Activated CD4-positive, alpha-beta T cell treated with anti-CD3 and anti-CD28 coated beads, Interleukin-2, amount 10 ng/mL, durations not matched to agents 24 days and 14 days (primary cell): ENCODE measurements at regions of chr12 and their contacts with region 1.

Region 1: DNA sequence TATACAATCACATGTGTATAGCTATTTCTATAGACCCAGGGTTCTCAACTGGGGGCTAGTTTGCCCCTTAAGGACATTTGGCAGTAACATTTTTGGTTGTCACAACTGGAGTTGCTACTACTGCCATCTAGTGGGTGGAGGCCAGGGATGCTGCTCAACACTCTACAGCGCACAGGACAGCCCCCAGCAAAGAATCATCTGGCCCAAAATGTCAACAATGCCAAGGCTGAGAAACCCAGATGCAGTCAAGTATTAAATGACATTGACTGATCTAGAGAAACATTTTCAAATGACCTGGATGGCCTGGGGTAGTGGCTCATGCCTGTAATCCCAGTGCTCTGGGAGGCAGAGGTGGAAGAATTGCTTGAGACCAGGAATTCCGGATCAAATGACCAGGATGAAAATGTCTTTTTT is 5.8 kb downstream of the WSB2 start:
- DNase-seq: peak; percentile 91
- H3K4me3 Mint-ChIP-seq: no peak overlapping the region
- H3K27ac Mint-ChIP-seq: peak overlapping the region; percentile 79
- H3K4me1 Mint-ChIP-seq: peaks cover 48% of the 10 kb centered on the region
- H3K27me3 Mint-ChIP-seq: no peaks in the 10 kb centered on the region

Region 2: DNA sequence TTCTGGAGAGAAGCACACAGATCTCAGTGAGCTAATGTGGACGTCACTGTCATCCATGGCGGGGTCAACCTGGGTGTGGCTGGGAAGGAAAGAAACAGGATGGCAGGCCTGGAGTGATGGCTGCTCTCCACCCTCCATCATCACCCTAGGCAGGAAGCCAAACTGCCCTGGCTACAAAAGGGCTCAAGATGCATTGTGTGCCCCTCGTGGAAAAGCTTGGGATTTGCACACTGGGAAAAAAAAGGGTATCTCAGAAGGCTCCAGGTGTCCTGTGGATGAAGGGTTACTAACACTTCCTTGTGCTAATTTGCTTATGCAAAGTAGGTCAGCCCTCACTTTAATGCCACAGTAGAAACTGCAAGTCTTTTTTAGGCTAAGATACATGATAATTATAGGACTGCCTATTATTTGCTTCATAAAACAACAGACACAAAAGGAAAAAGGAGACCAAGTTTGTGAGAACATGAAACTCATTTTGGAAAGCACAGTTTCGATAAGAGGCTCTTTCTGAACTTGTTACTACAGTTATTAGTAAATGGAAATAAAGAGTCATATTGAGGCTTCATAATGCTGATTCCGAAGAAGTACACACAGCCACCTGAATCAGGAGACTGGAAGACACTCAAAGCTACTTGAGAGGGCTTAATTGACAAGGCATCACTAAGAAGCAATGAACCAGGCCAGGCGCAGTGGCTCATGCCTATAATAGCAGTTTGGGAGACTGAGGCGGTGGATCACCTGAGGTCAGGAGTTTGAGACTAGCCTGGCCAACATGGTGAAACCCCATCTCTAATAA is 19.7 kb before region 1 on chr12:
- intact Hi-C with region 1: loop called (anchors 1 kb)
- DNase-seq: no peak
- H3K4me3 Mint-ChIP-seq: peak overlapping the region; percentile 57
- H3K27ac Mint-ChIP-seq: peak overlapping the region; percentile 99
- H3K4me1 Mint-ChIP-seq: peaks cover 46% of the 10 kb centered on the region
- H3K27me3 Mint-ChIP-seq: peaks cover 2% of the 10 kb centered on the region

Region 3: DNA sequence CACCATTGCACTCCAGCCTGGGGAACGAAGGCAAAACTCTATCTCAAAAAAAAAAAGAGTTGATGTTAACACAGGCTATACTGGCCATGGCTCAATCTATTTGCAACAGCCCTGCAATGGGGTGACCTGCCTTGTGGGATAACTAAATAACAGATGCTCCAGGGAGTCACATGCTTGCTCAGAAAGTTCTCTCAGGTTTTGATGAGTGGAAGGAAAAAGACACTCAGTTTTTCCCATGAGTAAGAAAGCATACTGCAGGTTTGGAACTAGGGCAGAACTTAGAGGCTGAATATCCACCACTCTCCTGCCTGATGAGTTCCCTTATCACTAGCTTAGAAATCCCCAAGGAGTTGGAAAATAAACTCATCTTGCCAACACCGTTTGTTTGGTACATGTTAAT is 11.1 kb before region 1 on chr12:
- intact Hi-C with region 1: loop called (anchors 1 kb)
- DNase-seq: no peak
- H3K4me3 Mint-ChIP-seq: peak overlapping the region; percentile 66
- H3K27ac Mint-ChIP-seq: peak overlapping the region; percentile 95
- H3K4me1 Mint-ChIP-seq: peaks cover 48% of the 10 kb centered on the region
- H3K27me3 Mint-ChIP-seq: no peaks in the 10 kb centered on the region